BJ (cell line): ENCODE measurements at regions of chr19 and their contacts with region 1.

Region 1: GRCh38 chr19:8505680-8506401 is 3.4 kb upstream of the PRAM1 start:
- DNase-seq: no peak
- H3K4me3 ChIP-seq: peak overlapping the region; percentile 49
- H3K27me3 ChIP-seq: no peaks in the 10 kb centered on the region
- CTCF ChIP-seq: peak; percentile 95

Region 2: GRCh38 chr19:8412783-8413628 is 92.8 kb before region 1 on chr19 and contains the start of gene MARCHF2:
- CTCF ChIA-PET with region 1: interaction called, 10 read pairs
- POLR2A ChIA-PET with region 1: no interaction called
- DNase-seq: peak; percentile 76
- H3K4me3 ChIP-seq: peak within 1 kb of the TSS; percentile 55
- H3K27me3 ChIP-seq: no peaks in the 10 kb centered on the region
- CTCF ChIP-seq: peak; percentile 65
- polyA plus RNA-seq, gene MARCHF2: 27.3 and 39.3 TPM in 2 replicates

Region 3: DNA sequence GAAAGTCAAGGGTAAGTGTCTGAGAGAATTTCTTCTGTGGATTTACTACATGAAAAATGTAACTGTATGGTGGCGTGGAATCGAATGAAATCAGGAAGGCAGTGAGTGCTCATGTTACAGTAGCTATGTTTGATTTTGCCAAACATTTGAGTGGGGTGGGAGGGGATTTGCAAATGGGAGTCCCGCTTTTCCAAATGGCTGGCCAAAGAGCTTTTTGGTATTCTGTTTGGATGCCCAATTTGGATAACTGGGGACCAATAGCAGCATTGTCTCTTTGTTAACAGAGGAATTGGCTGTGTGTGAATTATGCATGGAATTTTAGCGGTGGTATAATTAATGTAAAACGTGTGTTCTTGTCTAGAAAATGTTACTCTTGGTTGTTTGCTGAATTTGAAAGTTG is 43.3 kb before region 1 on chr19:
- CTCF ChIA-PET with region 1: interaction called, 10 read pairs
- POLR2A ChIA-PET with region 1: no interaction called
- DNase-seq: no peak
- H3K4me3 ChIP-seq: no peak overlapping the region
- H3K27me3 ChIP-seq: no peaks in the 10 kb centered on the region
- CTCF ChIP-seq: no peak